Activated T-helper 1 cell treated with anti-CD3 and anti-CD28 coated beads, Interleukin-12 subunit alpha, Interleukin-12 subunit beta, Interleukin-2, Interleukin-4 antibody, amounts not matched to agents 30 ng/mL and 10 ng/mL and 1 ng/mL, durations not matched to agents 14 hours and 24 hours and 36 hours (primary cell): ENCODE measurements at regions of chr2 and their contacts with region 1.

Region 1: GRCh38 chr2:84905181-84906107 is at the start of gene TMSB10:
- DNase-seq: peak; percentile 88
- H3K4me3 Mint-ChIP-seq: peak within 1 kb of the TSS; percentile 97
- H3K27ac Mint-ChIP-seq: peak within 1 kb of the TSS; percentile 95
- H3K4me1 Mint-ChIP-seq: peaks cover 78% of the 10 kb centered on the region
- H3K27me3 Mint-ChIP-seq: no peaks in the 10 kb centered on the region
- total RNA-seq, gene TMSB10: 2,415 and 2,510 TPM in 2 replicates

Region 2: GRCh38 chr2:84888401-84889276 is 16.8 kb before region 1 on chr2:
- intact Hi-C with region 1: loop called (anchors 1 kb)
- DNase-seq: peak; percentile 57
- H3K4me3 Mint-ChIP-seq: peak overlapping the region; percentile 62
- H3K27ac Mint-ChIP-seq: peak overlapping the region; percentile 97
- H3K4me1 Mint-ChIP-seq: peaks cover 69% of the 10 kb centered on the region
- H3K27me3 Mint-ChIP-seq: no peaks in the 10 kb centered on the region

Region 3: GRCh38 chr2:84919885-84920580 is 14.6 kb after region 1 on chr2:
- intact Hi-C with region 1: loop called (anchors 1 kb)
- DNase-seq: no peak
- H3K4me3 Mint-ChIP-seq: peak overlapping the region; percentile 65
- H3K27ac Mint-ChIP-seq: peak overlapping the region; percentile 91
- H3K4me1 Mint-ChIP-seq: peaks cover 44% of the 10 kb centered on the region
- H3K27me3 Mint-ChIP-seq: no peaks in the 10 kb centered on the region

Region 4: GRCh38 chr2:84939426-84940087 is 34.1 kb after region 1 on chr2:
- intact Hi-C with region 1: loop called (anchors 1 kb)
- DNase-seq: peak; percentile 83
- H3K4me3 Mint-ChIP-seq: peak overlapping the region; percentile 74
- H3K27ac Mint-ChIP-seq: peak overlapping the region; percentile 96
- H3K4me1 Mint-ChIP-seq: peaks cover 54% of the 10 kb centered on the region
- H3K27me3 Mint-ChIP-seq: no peaks in the 10 kb centered on the region

Region 5: GRCh38 chr2:84946204-84947009 is 41.0 kb after region 1 on chr2:
- intact Hi-C with region 1: loop called (anchors 1 kb)
- DNase-seq: peak; percentile 63
- H3K4me3 Mint-ChIP-seq: peak overlapping the region; percentile 43
- H3K27ac Mint-ChIP-seq: peak overlapping the region; percentile 91
- H3K4me1 Mint-ChIP-seq: peaks cover 40% of the 10 kb centered on the region
- H3K27me3 Mint-ChIP-seq: no peaks in the 10 kb centered on the region